Esophagus muscularis mucosa (tissue), 4 donors: ENCODE measurements at regions of chr10 and their contacts with region 1.

Region 1: GRCh38 chr10:21495752-21496342 is 29.6 kb downstream of the SKIDA1 start:
- DNase-seq: no peak
- H3K4me3 ChIP-seq: peak overlapping the region; percentile 74 to 85 (median 76)
- H3K27ac ChIP-seq: peak overlapping the region; percentile 70 to 80 (median 76)
- H3K4me1 ChIP-seq: peaks cover 16 to 43% (median 36%) of the 10 kb centered on the region in 4 donors
- H3K27me3 ChIP-seq: no peaks in the 10 kb centered on the region
- CTCF ChIP-seq: peak in 2 of 3 experiments; percentile 95 to 99
- EP300 ChIP-seq: no peak
- POLR2A ChIP-seq: no peak

Region 2: GRCh38 chr10:21278491-21279239 is 217.2 kb before region 1 on chr10:
- intact Hi-C with region 1: loop called (anchors 1 kb)
- DNase-seq: peak; percentile 95
- H3K4me3 ChIP-seq: no peak overlapping the region
- H3K27ac ChIP-seq: no peak overlapping the region
- H3K4me1 ChIP-seq: peaks cover 3 to 7% (median 6%) of the 10 kb centered on the region in 4 donors
- H3K27me3 ChIP-seq: no peaks in the 10 kb centered on the region
- CTCF ChIP-seq: peak; percentile 67 to 79 (median 75)
- EP300 ChIP-seq: no peak
- POLR2A ChIP-seq: no peak

Region 3: GRCh38 chr10:21533467-21534279 is 37.8 kb after region 1 on chr10 and contains the start of gene MLLT10:
- intact Hi-C with region 1: loop called (anchors 2 kb)
- DNase-seq: peak; percentile 97
- H3K4me3 ChIP-seq: peak within 1 kb of the TSS; percentile 88 to 92 (median 90)
- H3K27ac ChIP-seq: peak within 1 kb of the TSS; percentile 95 to 98 (median 96)
- H3K4me1 ChIP-seq: peaks cover 14 to 50% (median 43%) of the 10 kb centered on the region in 4 donors
- H3K27me3 ChIP-seq: no peaks in the 10 kb centered on the region
- CTCF ChIP-seq: peak in 1 of 3 experiments; percentile 55
- EP300 ChIP-seq: no peak
- POLR2A ChIP-seq: peak; percentile 62
- total RNA-seq, gene MLLT10: 23.5 to 39.7 (median 30.2) TPM

Region 4: GRCh38 chr10:21953585-21954057 is 457.8 kb after region 1 on chr10:
- intact Hi-C with region 1: loop called (anchors 10 kb)
- DNase-seq: no peak
- H3K4me3 ChIP-seq: no peak overlapping the region
- H3K27ac ChIP-seq: no peak overlapping the region
- H3K4me1 ChIP-seq: peaks cover 0 to 17% (median 6%) of the 10 kb centered on the region in 4 donors
- H3K27me3 ChIP-seq: no peaks in the 10 kb centered on the region
- CTCF ChIP-seq: peak; percentile 16 to 35 (median 28)
- EP300 ChIP-seq: no peak
- POLR2A ChIP-seq: no peak

Region 5: DNA sequence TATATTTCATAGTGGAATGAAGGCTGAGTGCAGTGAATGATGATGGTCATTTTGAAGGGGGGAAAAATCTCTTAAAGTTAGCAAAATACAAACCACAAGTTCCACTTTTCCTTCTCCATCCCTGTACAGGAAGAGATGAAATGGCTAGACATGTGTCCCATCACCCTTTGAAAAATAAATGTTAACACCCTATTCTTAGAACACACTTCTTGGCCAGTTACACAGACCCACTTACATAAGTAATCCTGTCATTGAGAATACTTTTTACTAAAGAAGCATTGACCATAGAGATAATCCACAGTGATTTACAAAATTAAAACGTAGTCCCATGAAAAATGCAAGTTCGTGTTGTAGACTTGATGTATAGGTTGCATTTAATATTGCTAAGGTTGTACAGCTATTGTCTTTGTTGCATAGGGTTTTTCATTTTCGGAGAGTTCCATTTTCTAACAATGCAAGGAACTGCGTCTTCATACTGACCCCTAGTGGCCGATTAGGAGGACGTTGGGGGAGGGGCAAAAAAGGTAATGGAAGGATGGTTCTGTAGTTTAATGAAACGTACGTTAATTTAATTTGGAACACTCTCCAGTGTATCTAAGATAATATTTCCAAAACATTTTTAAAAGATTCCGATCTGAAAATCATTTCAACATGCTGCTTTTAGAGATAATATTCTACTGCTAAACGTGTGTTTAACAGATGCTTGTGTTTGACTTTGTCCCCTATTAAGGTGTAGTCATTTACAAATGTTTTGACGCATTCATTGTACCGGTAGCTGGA is 1492.9 kb after region 1 on chr10:
- intact Hi-C with region 1: loop called (anchors 10 kb)
- DNase-seq: no peak
- H3K4me3 ChIP-seq: no peak overlapping the region
- H3K27ac ChIP-seq: no peak overlapping the region
- H3K4me1 ChIP-seq: peaks cover 0 to 10% (median 8%) of the 10 kb centered on the region in 4 donors
- H3K27me3 ChIP-seq: no peaks in the 10 kb centered on the region
- CTCF ChIP-seq: peak; percentile 87 to 92 (median 90)
- EP300 ChIP-seq: no peak
- POLR2A ChIP-seq: no peak